HEK293 (cell line): ENCODE measurements at regions of chr10 and their contacts with region 1.

Region 1: GRCh38 chr10:89029785-89030437 is 39.3 kb downstream of the FAS start:
- H3K4me3 ChIP-seq: no peak overlapping the region
- H3K27ac ChIP-seq: no peak overlapping the region
- H3K4me1 ChIP-seq: 0 out of 2 replicates have a peak, but pooled peaks cover 8% of the 10 kb centered on the region
- CTCF ChIP-seq: peak; percentile 81

Region 2: GRCh38 chr10:88996927-88997326 is 33.0 kb before region 1 on chr10:
- CTCF ChIA-PET with region 1: interaction called, 13 read pairs
- POLR2A ChIA-PET with region 1: no interaction called
- H3K4me3 ChIP-seq: no peak overlapping the region
- H3K27ac ChIP-seq: no peak overlapping the region
- H3K4me1 ChIP-seq: peaks cover 19% of the 10 kb centered on the region
- CTCF ChIP-seq: no peak

Region 3: DNA sequence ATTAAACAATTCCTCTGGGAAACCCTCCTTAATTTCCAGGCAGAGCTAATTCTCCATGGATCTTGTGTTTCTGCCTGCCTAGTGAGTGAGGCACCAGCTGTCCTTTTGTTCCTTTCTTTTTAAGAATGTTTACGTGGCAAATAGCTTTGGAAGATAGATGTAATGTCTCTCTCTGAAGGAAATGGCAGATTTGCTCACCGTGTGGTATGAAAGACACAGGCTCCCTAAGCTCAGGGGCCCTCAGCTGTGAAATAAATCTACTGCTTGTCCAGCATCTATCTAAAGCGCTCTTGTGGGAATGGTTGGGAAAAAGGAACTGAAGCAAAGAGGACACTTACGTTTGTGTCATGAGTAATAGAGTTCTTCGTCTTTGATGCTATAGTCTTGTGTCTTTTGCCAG is 25.2 kb after region 1 on chr10:
- CTCF ChIA-PET with region 1: interaction called, 16 read pairs
- POLR2A ChIA-PET with region 1: no interaction called
- H3K4me3 ChIP-seq: no peak overlapping the region
- H3K27ac ChIP-seq: no peak overlapping the region
- H3K4me1 ChIP-seq: no peaks in the 10 kb centered on the region
- CTCF ChIP-seq: no peak

Region 4: GRCh38 chr10:89207181-89207800 is 177.4 kb after region 1 on chr10 and contains the start of gene CH25H:
- CTCF ChIA-PET with region 1: interaction called, 37 read pairs
- POLR2A ChIA-PET with region 1: no interaction called
- H3K4me3 ChIP-seq: peak within 1 kb of the TSS; percentile 38
- H3K27ac ChIP-seq: peak within 1 kb of the TSS; percentile 35; the same call in 1 of the 2 replicates
- H3K4me1 ChIP-seq: peaks cover 4% of the 10 kb centered on the region; the same call in 1 of the 2 replicates
- CTCF ChIP-seq: no peak